ENCODE measurements at regions of chr10 and their contacts with region 1.

Region 1: GRCh38 chr10:26869528-26869927 is 8.8 kb upstream of the ABI1 start:
- DNase-seq: peak; percentile 40 to 62
- H3K4me3 ChIP-seq: no peak overlapping the region
- H3K27ac ChIP-seq: no peak overlapping the region
- H3K4me1 ChIP-seq: no peaks in the 10 kb centered on the region
- H3K27me3 ChIP-seq: no peaks in the 10 kb centered on the region
- CTCF ChIP-seq: no peak

Region 2: DNA sequence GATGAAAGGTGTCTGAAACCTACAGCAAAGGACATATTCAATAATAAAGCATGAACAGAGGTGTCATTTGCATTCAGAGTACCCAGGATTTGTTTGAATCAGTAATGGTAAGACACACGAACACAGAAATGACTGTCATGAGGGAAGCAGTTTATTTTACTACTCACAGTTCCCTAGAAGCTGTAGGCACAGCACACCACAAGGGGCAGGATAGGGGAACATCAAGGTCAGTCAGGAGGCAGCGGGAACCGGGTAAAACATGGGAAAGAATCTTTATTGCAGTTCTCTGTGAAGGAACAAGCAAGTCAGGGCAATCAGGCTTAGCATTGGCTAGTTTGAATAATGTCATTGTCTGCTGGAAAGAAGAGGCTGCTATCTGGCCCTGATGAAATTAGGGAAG is 242.2 kb before region 1 on chr10:
- CTCF ChIA-PET with region 1: no interaction called
- POLR2A ChIA-PET with region 1: no interaction called
- intact Hi-C with region 1: no loop called
- DNase-seq: no peak
- H3K4me3 ChIP-seq: no peak overlapping the region
- H3K27ac ChIP-seq: no peak overlapping the region
- H3K4me1 ChIP-seq: no peaks in the 10 kb centered on the region
- H3K27me3 ChIP-seq: peaks cover 11% of the 10 kb centered on the region; the same call in 1 of the 2 replicates
- CTCF ChIP-seq: no peak; the same call in 1 of the 2 replicates

Region 3: GRCh38 chr10:26840938-26841732 is 28.4 kb before region 1 on chr10:
- CTCF ChIA-PET with region 1: no interaction called
- POLR2A ChIA-PET with region 1: interaction called, 21 read pairs
- intact Hi-C with region 1: no loop called
- DNase-seq: no peak
- H3K4me3 ChIP-seq: no peak overlapping the region
- H3K27ac ChIP-seq: no peak overlapping the region
- H3K4me1 ChIP-seq: no peaks in the 10 kb centered on the region
- H3K27me3 ChIP-seq: no peaks in the 10 kb centered on the region
- CTCF ChIP-seq: no peak

Region 4: DNA sequence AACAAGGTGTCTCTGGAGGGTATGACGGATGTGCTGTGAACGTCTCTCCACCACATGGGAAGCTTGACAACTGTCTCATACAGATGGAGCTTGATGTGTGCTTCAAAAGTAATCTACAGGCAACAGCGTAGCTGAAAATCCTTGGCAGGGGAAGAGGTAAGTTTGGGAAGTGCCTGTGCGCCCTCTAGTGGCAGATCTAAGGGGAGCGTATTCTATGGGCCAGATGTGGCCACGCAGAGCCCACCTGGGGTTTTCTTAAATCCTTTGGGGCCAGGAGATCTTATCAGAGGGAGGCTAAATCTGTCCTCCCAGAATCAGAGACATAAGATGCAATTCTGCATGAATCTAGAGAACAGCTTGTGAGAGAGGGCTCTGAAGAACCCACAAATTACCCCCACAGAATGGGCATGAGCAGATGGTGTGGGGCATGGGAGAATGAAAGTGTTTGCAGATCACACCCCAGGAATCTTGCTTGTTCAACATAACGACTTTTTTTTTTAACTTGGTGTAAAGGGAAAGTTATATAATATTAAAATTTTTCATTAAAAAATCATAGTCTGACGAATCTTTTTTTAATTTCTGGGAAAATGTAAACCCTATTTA is 1524.5 kb after region 1 on chr10:
- CTCF ChIA-PET with region 1: no interaction called
- POLR2A ChIA-PET with region 1: interaction called, 12 read pairs
- intact Hi-C with region 1: no loop called
- DNase-seq: peak; percentile 43 to 46
- H3K4me3 ChIP-seq: no peak overlapping the region
- H3K27ac ChIP-seq: no peak overlapping the region
- H3K4me1 ChIP-seq: no peaks in the 10 kb centered on the region
- H3K27me3 ChIP-seq: peaks cover 12% of the 10 kb centered on the region
- CTCF ChIP-seq: peak; percentile 86